ENCODE measurements at regions of chr10 and their contacts with region 1.

Region 1: DNA sequence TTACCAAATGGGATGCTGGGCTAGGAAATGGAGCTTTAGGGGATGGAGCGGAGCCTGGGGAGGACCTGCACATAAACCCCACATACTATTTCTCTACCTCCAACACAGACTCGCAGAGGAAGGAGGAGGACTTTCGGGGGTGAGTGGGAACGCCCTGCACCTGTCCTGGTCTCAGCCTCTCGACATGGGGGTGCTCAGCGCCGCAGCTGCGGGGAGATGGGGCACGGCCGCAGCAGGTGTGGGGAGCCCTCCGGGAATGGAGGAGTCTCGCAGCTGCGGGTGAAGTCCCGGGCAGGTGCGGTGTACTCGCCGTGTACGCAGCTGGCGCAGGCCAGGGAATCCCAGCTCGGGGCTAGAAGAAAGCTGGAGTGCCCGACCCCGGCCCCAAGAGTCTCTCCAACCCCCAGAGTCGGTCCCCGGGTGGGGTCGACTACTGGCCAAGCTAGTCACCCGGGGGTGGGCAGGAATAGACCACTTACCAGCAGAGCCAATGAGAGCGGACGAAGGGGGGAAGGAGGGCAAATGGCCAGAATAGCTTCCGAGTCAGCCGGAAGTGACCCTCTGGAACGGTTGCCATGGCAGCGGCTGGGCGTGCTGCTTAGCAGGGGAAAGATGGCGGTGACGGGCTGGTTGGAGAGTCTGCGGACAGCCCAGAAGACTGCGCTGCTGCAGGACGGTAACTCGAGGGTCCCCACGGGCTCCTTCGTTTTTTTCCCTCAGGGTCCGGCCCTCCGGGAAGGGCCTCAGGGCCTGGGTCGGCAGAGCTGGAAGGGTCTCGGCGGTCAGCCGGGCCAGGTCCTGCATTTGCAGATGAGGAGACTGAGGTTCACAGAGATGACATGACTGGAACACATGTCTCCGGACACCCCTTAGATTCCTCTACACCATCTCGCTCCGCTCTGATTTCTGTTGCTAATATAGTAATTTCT is at the starts of genes DPCD and POLL:
- DNase-seq: peak; percentile 93
- H3K4me3 Mint-ChIP-seq: peak within 1 kb of the TSS; percentile 93
- H3K27ac Mint-ChIP-seq: peak within 1 kb of the TSS; percentile 87
- H3K4me1 Mint-ChIP-seq: peaks cover 17% of the 10 kb centered on the region
- H3K27me3 Mint-ChIP-seq: no peaks in the 10 kb centered on the region
- CTCF ChIP-seq: no peak
- total RNA-seq, gene DPCD: 24.2 and 25.7 TPM in 2 replicates
- total RNA-seq, gene POLL: 38.5 and 40.7 TPM in 2 replicates

Region 2: DNA sequence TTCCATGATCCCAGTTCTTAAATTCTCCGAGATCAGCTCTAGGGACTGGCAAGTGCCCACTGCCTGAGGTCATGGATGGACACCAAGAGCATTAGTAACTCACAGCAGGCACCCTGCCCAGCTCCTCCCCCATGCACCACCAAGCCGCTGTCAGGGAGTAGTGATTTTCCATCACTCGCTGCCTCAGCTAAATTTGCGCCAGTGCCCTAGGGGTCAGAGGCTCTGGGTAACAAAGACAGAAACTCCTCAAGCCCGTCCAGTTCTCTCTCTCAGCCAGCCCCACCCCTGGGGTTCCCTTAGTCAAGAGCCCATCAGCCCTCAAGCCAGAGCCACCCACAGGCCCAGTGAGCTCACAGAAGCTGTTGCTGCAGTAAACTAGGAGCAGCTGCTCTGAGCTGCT is 812.6 kb before region 1 on chr10:
- CTCF ChIA-PET with region 1: no interaction called
- POLR2A ChIA-PET with region 1: no interaction called
- intact Hi-C with region 1: no loop called
- DNase-seq: peak; percentile 54
- H3K4me3 Mint-ChIP-seq: no peak overlapping the region
- H3K27ac Mint-ChIP-seq: no peak overlapping the region
- H3K4me1 Mint-ChIP-seq: no peaks in the 10 kb centered on the region
- H3K27me3 Mint-ChIP-seq: peaks cover 49% of the 10 kb centered on the region
- CTCF ChIP-seq: no peak

Region 3: GRCh38 chr10:101576211-101576863 is 11.7 kb before region 1 on chr10:
- CTCF ChIA-PET with region 1: interaction called, 13 read pairs
- POLR2A ChIA-PET with region 1: interaction called, 13 read pairs
- intact Hi-C with region 1: no loop called
- DNase-seq: no peak
- H3K4me3 Mint-ChIP-seq: no peak overlapping the region
- H3K27ac Mint-ChIP-seq: no peak overlapping the region
- H3K4me1 Mint-ChIP-seq: no peaks in the 10 kb centered on the region
- H3K27me3 Mint-ChIP-seq: no peaks in the 10 kb centered on the region
- CTCF ChIP-seq: no peak

Region 4: DNA sequence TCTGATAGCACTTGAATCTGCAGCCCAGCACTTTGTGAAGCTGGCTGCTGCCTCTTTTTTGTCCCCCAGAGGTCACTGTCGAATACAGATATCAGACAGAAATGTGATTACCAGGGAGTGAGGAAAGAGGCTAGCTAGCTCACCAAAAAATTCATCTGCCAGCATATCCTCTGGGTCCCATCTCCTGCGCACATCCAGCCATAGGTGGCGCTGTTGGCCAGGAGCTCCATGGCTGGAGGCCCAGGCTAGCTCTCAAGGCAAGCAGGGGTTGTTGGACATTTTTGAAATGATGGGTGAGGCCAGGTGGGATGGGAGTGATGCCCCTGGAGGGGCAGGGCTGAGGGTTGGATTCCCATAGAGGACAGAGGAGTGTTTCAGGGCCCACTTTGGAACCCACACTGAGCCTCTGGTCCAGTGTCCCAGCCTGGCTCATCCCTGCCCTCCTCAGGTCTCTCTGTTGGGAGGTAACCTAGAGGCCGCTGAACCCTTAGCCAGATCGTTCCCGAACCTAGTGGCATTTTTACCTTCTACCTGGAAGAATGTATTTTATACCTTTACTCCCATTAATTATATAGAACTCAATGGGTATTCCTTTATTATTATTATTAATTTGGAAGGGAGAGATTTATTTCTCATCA is 14.9 kb after region 1 on chr10:
- CTCF ChIA-PET with region 1: interaction called, 18 read pairs
- POLR2A ChIA-PET with region 1: interaction called, 8 read pairs
- intact Hi-C with region 1: no loop called
- DNase-seq: peak; percentile 74
- H3K4me3 Mint-ChIP-seq: no peak overlapping the region
- H3K27ac Mint-ChIP-seq: no peak overlapping the region
- H3K4me1 Mint-ChIP-seq: no peaks in the 10 kb centered on the region
- H3K27me3 Mint-ChIP-seq: no peaks in the 10 kb centered on the region
- CTCF ChIP-seq: peak; percentile 93

Region 5: DNA sequence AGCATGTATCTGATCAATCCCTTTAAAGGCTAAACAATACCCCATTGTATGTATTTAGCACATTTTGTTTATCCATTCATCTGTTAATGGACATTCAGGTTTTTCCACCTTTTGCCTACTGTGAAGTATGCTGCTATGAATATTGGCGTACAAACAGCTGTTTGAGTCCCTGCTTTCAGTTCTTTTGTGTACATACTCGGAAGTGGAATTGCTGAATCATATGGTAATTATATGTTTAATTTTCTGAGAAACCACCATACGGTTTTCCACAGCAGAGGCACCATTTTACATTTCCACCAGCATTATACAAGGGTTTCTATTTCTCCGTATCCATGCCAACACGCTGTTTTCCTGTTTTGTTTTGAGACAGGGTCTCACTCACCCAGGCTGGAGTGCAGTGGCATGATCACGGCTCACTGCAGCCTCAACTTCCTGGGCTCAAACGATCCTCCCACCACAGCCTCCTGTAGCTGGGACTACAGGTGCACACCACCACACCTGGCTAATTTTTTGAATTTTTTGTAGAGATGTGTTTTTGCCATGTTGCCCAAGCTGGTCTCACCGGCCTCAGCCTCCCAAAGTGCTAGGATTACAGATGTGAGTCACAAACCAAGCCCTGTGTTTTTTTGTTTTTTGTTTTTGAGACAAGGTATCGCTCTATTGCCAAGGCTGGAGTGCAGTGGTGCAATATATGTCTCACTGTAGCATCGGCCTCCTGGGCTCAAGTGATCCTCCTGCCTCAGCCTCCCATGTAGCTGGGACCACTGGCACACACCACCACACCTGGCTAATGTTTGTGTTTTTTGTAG is 129.1 kb after region 1 on chr10:
- CTCF ChIA-PET with region 1: no interaction called
- POLR2A ChIA-PET with region 1: no interaction called
- intact Hi-C with region 1: no loop called
- DNase-seq: no peak
- H3K4me3 Mint-ChIP-seq: no peak overlapping the region
- H3K27ac Mint-ChIP-seq: no peak overlapping the region
- H3K4me1 Mint-ChIP-seq: no peaks in the 10 kb centered on the region
- H3K27me3 Mint-ChIP-seq: no peaks in the 10 kb centered on the region
- CTCF ChIP-seq: no peak

Measured in MCF 10A (cell line).